BJ (cell line): ENCODE measurements at regions of chr4 and their contacts with region 1.

Region 1: GRCh38 chr4:145775406-145775805 is 95.5 kb downstream of the C4orf51 start:
- DNase-seq: no peak
- H3K4me3 ChIP-seq: no peak overlapping the region
- H3K27me3 ChIP-seq: no peaks in the 10 kb centered on the region
- CTCF ChIP-seq: no peak

Region 2: GRCh38 chr4:146585761-146586333 is 810.4 kb after region 1 on chr4:
- CTCF ChIA-PET with region 1: no interaction called
- POLR2A ChIA-PET with region 1: interaction called, 11 read pairs
- DNase-seq: peak; percentile 34
- H3K4me3 ChIP-seq: no peak overlapping the region
- H3K27me3 ChIP-seq: no peaks in the 10 kb centered on the region
- CTCF ChIP-seq: no peak